ENCODE measurements at regions of chr15 and their contacts with region 1.

Region 1: DNA sequence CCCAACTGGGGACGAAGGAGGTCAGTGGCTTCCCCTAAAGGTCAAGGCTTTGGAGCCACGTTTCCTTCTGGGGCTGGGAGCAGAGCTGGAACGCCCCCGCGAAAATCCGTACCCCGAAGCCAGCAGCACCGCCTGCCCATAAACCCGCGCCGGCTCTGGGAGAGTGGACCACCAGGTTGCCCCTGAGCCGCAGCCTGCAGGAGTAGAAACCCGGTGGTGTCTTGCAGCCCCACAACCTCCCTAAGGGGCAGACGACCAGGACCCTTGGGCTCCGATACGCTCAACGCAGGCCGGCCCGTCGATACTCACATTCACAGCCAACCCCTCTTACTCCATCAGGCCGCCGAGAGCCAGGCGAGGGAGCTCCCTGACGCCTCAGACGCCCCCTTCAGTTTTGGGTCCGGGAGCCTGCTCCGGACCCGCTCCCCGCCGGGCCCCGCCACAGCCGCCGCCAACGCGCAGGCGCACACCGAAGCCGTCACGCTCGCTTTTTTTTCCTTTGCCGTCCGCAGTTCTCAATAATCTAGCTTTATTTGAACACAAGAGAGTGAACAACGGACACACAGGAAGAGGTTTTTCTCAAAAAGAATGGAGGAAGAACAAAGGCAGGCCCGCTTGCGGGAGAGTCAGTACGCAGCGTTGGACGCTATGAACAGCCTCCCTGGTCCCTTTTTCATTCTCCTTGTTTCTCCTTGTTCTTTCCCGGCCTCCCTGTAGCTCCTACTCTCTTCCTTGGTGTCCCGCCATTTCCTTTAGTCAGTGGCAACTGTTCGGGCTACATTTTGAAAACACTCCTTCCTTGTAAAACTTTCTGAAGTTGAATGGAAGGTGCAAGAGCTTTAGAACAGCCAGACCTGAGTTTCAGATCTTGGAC is at the start of gene ZNF106:
- DNase-seq: peak; percentile 68 to 92 (median 81)
- ATAC-seq: peak; percentile 54 to 65 (median 60)
- H3K4me3 ChIP-seq: peak within 1 kb of the TSS; percentile 93 to 100
- H3K4me3 Mint-ChIP-seq: peak within 1 kb of the TSS; percentile 95 to 98 (median 96)
- H3K27ac ChIP-seq: peak within 1 kb of the TSS; percentile 89
- H3K27ac Mint-ChIP-seq: peak within 1 kb of the TSS; percentile 97 to 98
- H3K4me1 ChIP-seq: peaks cover 26 to 39% of the 10 kb centered on the region in 2 experiments
- H3K4me1 Mint-ChIP-seq: peaks cover 51 to 64% (median 53%) of the 10 kb centered on the region in 3 donors
- H3K27me3 ChIP-seq: no peaks in the 10 kb centered on the region
- H3K27me3 Mint-ChIP-seq: no peaks in the 10 kb centered on the region
- total RNA-seq, gene ZNF106: 33.1 to 41.1 (median 36.7) TPM

Region 2: GRCh38 chr15:42427429-42428223 is 63.3 kb before region 1 on chr15:
- CTCF ChIA-PET with region 1: interaction called in 1 of 2 experiments, 17 read pairs
- POLR2A ChIA-PET with region 1: no interaction called
- DNase-seq: no peak
- ATAC-seq: no peak
- H3K4me3 ChIP-seq: no peak overlapping the region
- H3K4me3 Mint-ChIP-seq: no peak overlapping the region
- H3K27ac ChIP-seq: no peak overlapping the region
- H3K27ac Mint-ChIP-seq: no peak overlapping the region
- H3K4me1 ChIP-seq: no peaks in the 10 kb centered on the region
- H3K4me1 Mint-ChIP-seq: no peaks in the 10 kb centered on the region
- H3K27me3 ChIP-seq: no peaks in the 10 kb centered on the region
- H3K27me3 Mint-ChIP-seq: no peaks in the 10 kb centered on the region

Region 3: DNA sequence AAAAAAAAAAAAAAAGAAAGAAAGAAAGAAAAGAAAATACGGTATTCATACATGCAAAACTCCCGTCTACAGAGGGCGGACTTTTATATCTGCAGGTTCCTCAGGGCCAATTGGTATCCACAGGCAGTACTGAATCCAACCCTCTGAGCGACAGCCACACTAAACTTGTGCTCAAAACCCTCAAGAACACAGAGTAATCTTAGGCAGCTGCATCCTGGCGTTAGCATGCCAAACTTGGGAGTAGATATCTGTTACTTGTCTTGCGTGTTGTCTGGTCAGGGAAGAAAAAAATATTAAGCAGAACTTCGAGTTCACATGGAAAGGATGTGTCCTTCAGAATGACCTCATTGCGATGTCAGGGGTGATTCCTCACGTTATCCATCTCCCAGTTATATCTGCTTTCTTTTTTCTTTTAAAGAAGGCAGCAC is 17.4 kb after region 1 on chr15:
- CTCF ChIA-PET with region 1: no interaction called
- POLR2A ChIA-PET with region 1: no interaction called
- DNase-seq: no peak
- ATAC-seq: no peak
- H3K4me3 ChIP-seq: no peak overlapping the region
- H3K4me3 Mint-ChIP-seq: no peak overlapping the region
- H3K27ac ChIP-seq: no peak overlapping the region
- H3K27ac Mint-ChIP-seq: no peak overlapping the region
- H3K4me1 ChIP-seq: no peaks in the 10 kb centered on the region
- H3K4me1 Mint-ChIP-seq: peaks cover 6 to 15% (median 12%) of the 10 kb centered on the region in 3 donors
- H3K27me3 ChIP-seq: no peaks in the 10 kb centered on the region
- H3K27me3 Mint-ChIP-seq: no peaks in the 10 kb centered on the region